Mammary epithelial cell (primary cell): ENCODE measurements at regions of chr11 and their contacts with region 1.

Region 1: GRCh38 chr11:72024069-72024754 is 25.5 kb downstream of the IL18BP start:
- DNase-seq: no peak
- H3K4me3 ChIP-seq: no peak overlapping the region
- H3K27ac ChIP-seq: no peak overlapping the region
- H3K4me1 ChIP-seq: peaks cover 14% of the 10 kb centered on the region
- H3K27me3 ChIP-seq: no peaks in the 10 kb centered on the region
- CTCF ChIP-seq: no peak

Region 2: DNA sequence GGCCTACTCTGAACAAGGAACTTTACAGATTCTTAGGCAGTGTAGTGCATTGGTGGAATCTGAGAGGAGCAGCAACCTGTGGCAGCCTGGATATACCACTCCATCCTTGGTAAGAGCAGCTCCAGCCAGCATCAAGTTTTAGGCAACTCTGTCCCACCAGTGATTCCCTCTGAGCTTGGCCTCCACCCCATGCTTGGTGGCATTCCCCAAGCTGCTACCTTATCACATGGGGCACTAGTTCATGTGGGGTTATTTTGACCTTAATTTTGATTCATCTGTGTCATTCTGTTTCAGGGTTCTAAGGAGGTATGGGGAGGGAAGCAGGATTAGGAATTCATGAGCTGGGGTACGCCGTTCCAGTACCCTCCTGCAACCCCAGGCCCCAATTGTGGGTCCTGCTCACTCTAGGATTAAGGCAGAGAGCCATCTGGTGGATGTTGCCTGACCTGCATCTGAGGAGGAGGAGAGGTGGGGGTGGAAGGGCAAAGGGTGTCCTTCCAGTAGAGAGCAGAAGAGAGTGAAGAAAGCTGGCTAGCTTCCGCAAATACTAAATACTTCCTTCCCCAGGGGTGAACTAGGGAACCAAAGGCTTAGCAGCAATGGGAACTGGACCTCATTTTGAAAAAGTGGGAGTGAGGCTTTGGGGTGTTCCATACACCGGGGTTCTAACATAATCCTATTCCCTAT is 66.9 kb after region 1 on chr11:
- CTCF ChIA-PET with region 1: interaction called, 6 read pairs
- dilution Hi-C with region 1: no loop called
- in situ Hi-C with region 1: loop called (anchors 5 kb)
- intact Hi-C with region 1: loop called (anchors 1 kb)
- DNase-seq: peak; percentile 38
- H3K4me3 ChIP-seq: no peak overlapping the region
- H3K27ac ChIP-seq: no peak overlapping the region
- H3K4me1 ChIP-seq: peaks cover 3% of the 10 kb centered on the region
- H3K27me3 ChIP-seq: no peaks in the 10 kb centered on the region
- CTCF ChIP-seq: peak; percentile 84 to 89